Activated naive CD4-positive, alpha-beta T cell treated with anti-CD3 and anti-CD28 coated beads for 36 hours (primary cell): ENCODE measurements at regions of chr15 and their contacts with region 1.

Region 1: GRCh38 chr15:41557673-41558399 is 1.2 kb upstream of the TYRO3 start:
- DNase-seq: peak; percentile 79
- H3K4me3 Mint-ChIP-seq: peak overlapping the region; percentile 87
- H3K27ac Mint-ChIP-seq: no peak overlapping the region
- H3K4me1 Mint-ChIP-seq: peaks cover 13% of the 10 kb centered on the region
- H3K27me3 Mint-ChIP-seq: peaks cover 15% of the 10 kb centered on the region

Region 2: DNA sequence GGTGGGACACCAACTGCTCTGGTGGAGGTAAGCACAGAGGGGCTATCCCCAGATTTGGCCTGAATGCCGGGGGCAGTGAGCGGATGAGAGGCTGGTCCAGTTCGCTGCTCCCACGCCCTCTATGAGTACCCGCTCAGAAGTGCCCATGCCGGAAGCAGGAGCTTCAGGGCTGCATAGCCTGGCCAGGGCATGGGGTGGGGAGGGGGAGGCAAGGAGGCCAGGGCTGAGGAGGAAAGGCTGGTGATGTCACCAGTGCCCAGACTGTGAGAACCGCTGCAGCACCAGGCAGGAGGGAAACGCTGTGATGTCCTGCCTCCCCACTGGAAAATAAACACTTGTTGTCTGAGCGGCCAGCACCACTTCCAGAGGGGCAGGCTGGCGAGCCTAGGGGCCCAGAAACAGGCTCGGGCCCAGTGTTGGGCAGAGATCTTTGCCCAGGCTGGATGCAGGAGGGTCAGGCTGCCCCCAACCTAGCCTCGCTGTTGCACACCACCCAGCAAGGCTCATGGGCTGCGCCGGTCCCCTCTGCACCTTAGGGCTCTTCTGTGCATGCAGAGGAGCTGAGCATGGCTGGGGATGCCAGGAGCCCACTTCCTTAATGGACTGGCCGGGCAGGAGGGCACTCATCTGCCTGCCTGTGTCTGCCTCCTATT is 639.6 kb before region 1 on chr15:
- CTCF ChIA-PET with region 1: no interaction called
- intact Hi-C with region 1: no loop called
- DNase-seq: no peak
- H3K4me3 Mint-ChIP-seq: no peak overlapping the region
- H3K27ac Mint-ChIP-seq: no peak overlapping the region
- H3K4me1 Mint-ChIP-seq: no peaks in the 10 kb centered on the region
- H3K27me3 Mint-ChIP-seq: no peaks in the 10 kb centered on the region

Region 3: DNA sequence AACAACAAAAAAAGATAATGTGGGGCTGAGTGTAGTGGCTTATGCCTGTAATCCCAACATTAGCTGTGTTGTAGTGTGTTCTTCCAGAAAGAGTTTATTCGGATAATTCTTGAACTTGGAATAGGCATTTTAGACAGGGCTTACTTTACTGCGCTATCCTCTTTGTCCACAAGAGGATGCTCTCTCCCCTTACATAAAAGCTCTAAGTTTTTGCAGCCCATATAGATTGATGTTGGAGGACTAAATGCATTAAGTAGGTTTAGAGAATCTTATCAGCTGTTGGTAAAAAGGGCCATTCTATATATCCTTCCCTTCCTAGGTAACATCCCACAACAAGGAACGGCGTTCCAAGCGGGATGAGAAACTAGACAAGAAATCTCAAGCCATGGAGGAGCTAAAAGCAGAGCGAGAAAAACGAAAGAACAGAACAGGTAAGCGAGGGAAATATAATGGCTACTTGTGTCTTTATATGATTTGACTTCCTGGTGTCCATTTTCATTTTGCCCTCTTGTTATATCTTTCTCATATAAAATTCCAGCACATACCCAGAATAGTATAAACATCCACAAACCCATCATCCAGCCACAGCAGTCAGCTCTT is 91.9 kb before region 1 on chr15:
- CTCF ChIA-PET with region 1: interaction called, 3 read pairs
- intact Hi-C with region 1: loop called (anchors 1 kb)
- DNase-seq: peak; percentile 57
- H3K4me3 Mint-ChIP-seq: no peak overlapping the region
- H3K27ac Mint-ChIP-seq: no peak overlapping the region
- H3K4me1 Mint-ChIP-seq: no peaks in the 10 kb centered on the region
- H3K27me3 Mint-ChIP-seq: no peaks in the 10 kb centered on the region

Region 4: GRCh38 chr15:41603941-41604911 is 46.4 kb after region 1 on chr15:
- CTCF ChIA-PET with region 1: interaction called, 10 read pairs
- intact Hi-C with region 1: no loop called
- DNase-seq: peak; percentile 72
- H3K4me3 Mint-ChIP-seq: peak overlapping the region; percentile 69
- H3K27ac Mint-ChIP-seq: no peak overlapping the region
- H3K4me1 Mint-ChIP-seq: peaks cover 11% of the 10 kb centered on the region
- H3K27me3 Mint-ChIP-seq: peaks cover 2% of the 10 kb centered on the region

Region 5: GRCh38 chr15:41660235-41661077 is 102.6 kb after region 1 on chr15 and contains the start of gene MGA:
- CTCF ChIA-PET with region 1: no interaction called
- intact Hi-C with region 1: loop called (anchors 1 kb)
- DNase-seq: peak; percentile 84
- H3K4me3 Mint-ChIP-seq: peak within 1 kb of the TSS; percentile 95
- H3K27ac Mint-ChIP-seq: peak within 1 kb of the TSS; percentile 81
- H3K4me1 Mint-ChIP-seq: peaks cover 32% of the 10 kb centered on the region
- H3K27me3 Mint-ChIP-seq: peaks cover 2% of the 10 kb centered on the region
- total RNA-seq, gene MGA: 27.4 to 28.3 TPM

Region 6: DNA sequence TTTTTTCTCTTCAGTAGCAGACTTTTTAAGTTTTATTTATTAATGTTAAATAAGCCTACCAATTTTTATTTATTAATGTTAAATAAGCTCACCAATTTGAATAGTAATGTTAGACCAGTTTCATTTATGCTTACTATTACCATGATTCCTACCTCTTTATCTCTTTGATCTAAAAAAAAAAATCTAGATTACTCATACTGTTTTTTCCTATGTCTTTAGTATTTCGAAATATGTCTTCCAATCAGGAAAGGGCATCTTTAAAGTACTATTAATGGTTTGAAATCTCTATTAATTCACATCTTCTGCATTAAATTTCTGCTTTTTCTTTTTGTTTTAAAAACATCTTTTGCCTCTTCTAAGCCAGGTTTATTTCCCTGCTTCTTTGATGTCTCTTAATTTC is 189.0 kb after region 1 on chr15:
- CTCF ChIA-PET with region 1: no interaction called
- intact Hi-C with region 1: no loop called
- DNase-seq: no peak
- H3K4me3 Mint-ChIP-seq: no peak overlapping the region
- H3K27ac Mint-ChIP-seq: no peak overlapping the region
- H3K4me1 Mint-ChIP-seq: no peaks in the 10 kb centered on the region
- H3K27me3 Mint-ChIP-seq: no peaks in the 10 kb centered on the region

Region 7: DNA sequence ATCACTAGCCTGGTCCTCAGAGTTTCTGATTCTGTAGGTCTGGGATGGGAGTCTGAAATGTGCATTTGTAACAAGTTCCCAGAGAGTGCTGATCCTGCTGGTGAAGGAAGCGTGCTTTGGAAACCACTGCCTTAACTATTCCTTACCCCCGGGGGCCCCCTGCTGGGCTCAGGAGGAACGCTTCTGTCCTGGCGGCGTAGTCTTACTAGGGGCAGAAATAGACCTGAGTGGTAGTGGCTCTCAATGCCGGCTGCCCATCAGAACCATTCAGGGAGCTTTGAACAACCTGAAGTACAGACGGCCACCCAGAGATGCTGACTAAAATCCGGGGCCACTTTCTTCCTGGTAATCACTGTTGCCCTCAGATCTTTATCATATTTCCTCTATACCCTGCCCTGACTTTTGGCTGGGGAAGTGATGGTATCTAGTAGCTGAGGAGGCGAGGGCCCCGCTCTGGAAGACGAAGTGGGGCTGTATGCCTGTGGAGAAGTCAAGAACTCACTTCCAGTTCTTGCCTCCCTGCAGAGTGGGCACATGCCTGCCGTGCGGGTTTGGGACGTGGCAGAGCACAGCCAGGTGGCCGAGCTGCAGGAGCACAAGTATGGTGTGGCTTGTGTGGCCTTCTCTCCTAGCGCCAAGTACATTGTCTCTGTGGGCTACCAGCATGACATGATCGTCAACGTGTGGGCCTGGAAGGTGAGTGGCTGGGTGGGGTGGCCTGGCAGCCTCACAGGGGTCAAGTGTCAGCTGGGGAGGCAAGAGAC is 253.8 kb after region 1 on chr15:
- CTCF ChIA-PET with region 1: interaction called, 8 read pairs
- intact Hi-C with region 1: loop called (anchors 1 kb)
- DNase-seq: peak; percentile 85
- H3K4me3 Mint-ChIP-seq: no peak overlapping the region
- H3K27ac Mint-ChIP-seq: no peak overlapping the region
- H3K4me1 Mint-ChIP-seq: peaks cover 6% of the 10 kb centered on the region
- H3K27me3 Mint-ChIP-seq: no peaks in the 10 kb centered on the region

Region 8: DNA sequence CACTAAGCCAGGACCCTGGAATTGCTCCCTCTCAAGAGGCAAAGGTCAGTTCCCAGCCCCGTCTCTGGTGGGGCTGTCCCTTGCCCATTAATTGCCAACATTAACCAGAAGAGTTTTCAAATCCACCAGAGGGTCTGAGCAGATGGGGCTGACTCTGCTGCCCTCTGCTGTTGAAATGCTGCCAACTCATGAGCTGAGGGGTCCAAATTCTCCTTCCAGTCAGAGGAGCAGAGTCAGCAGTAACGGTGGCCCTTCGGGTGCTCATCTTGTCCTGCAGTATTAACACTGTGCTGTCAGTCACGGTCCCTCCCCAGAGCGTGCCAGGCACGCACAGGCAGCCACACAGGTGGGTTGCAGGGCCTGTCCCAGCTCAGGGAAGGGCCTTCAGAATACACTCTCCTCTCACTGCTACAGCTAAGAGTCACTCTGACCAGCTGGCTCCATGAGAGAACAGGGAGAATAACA is 346.7 kb after region 1 on chr15:
- CTCF ChIA-PET with region 1: interaction called, 3 read pairs
- intact Hi-C with region 1: loop called (anchors 1 kb)
- DNase-seq: peak; percentile 82
- H3K4me3 Mint-ChIP-seq: no peak overlapping the region
- H3K27ac Mint-ChIP-seq: no peak overlapping the region
- H3K4me1 Mint-ChIP-seq: peaks cover 11% of the 10 kb centered on the region
- H3K27me3 Mint-ChIP-seq: no peaks in the 10 kb centered on the region